Esophagus muscularis mucosa (tissue), 4 donors: ENCODE measurements at regions of chr18 and their contacts with region 1.

Region 1: GRCh38 chr18:11733031-11733430 is 44.0 kb downstream of the GNAL start:
- DNase-seq: peak; percentile 95
- H3K4me3 ChIP-seq: peak overlapping the region; percentile 23 to 48 (median 40)
- H3K27ac ChIP-seq: no peak overlapping the region
- H3K4me1 ChIP-seq: peaks cover 0 to 8% (median 7%) of the 10 kb centered on the region in 4 donors
- H3K27me3 ChIP-seq: no peaks in the 10 kb centered on the region
- CTCF ChIP-seq: peak; percentile 83 to 89 (median 84)
- EP300 ChIP-seq: no peak
- POLR2A ChIP-seq: no peak

Region 2: GRCh38 chr18:11494107-11494506 is 238.9 kb before region 1 on chr18:
- intact Hi-C with region 1: no loop called
- DNase-seq: no peak
- H3K4me3 ChIP-seq: no peak overlapping the region
- H3K27ac ChIP-seq: no peak overlapping the region
- H3K4me1 ChIP-seq: no peaks in the 10 kb centered on the region
- H3K27me3 ChIP-seq: no peaks in the 10 kb centered on the region
- CTCF ChIP-seq: no peak
- EP300 ChIP-seq: no peak
- POLR2A ChIP-seq: no peak

Region 3: DNA sequence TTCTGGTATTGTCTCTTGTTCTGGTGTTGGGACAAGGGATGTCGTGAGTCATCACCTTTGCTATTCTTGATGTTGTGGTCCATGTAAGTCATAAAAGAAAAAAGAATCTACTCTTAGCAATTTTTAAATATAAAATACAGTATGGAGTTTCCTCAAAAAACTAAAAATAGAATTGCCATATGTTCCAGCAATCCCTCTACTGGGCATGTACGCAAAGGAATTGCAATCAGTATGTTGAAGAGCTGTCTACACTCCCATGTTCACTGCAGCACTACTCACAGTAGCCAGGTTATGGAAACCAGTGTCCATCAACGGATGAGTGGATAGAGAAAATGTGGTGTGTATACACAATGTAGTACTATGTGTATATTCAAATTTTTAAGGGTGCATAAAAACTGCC is 54.8 kb before region 1 on chr18:
- intact Hi-C with region 1: no loop called
- DNase-seq: no peak
- H3K4me3 ChIP-seq: no peak overlapping the region
- H3K27ac ChIP-seq: no peak overlapping the region
- H3K4me1 ChIP-seq: no peaks in the 10 kb centered on the region
- H3K27me3 ChIP-seq: peaks cover 0 to 51% (median 0%) of the 10 kb centered on the region in 4 donors
- CTCF ChIP-seq: no peak
- EP300 ChIP-seq: no peak
- POLR2A ChIP-seq: no peak

Region 4: GRCh38 chr18:11851146-11851805 is 118.2 kb after region 1 on chr18 and contains the start of gene CHMP1B:
- intact Hi-C with region 1: loop called (anchors 10 kb)
- DNase-seq: peak; percentile 99
- H3K4me3 ChIP-seq: peak within 1 kb of the TSS; percentile 66 to 94 (median 82)
- H3K27ac ChIP-seq: peak within 1 kb of the TSS; percentile 86 to 96 (median 94)
- H3K4me1 ChIP-seq: peaks cover 31 to 47% (median 42%) of the 10 kb centered on the region in 4 donors
- H3K27me3 ChIP-seq: no peaks in the 10 kb centered on the region
- CTCF ChIP-seq: peak in 1 of 3 experiments; percentile 22
- EP300 ChIP-seq: peak; percentile 13
- POLR2A ChIP-seq: peak; percentile 96
- total RNA-seq, gene CHMP1B: 42.0 to 58.6 (median 49.7) TPM

Region 5: DNA sequence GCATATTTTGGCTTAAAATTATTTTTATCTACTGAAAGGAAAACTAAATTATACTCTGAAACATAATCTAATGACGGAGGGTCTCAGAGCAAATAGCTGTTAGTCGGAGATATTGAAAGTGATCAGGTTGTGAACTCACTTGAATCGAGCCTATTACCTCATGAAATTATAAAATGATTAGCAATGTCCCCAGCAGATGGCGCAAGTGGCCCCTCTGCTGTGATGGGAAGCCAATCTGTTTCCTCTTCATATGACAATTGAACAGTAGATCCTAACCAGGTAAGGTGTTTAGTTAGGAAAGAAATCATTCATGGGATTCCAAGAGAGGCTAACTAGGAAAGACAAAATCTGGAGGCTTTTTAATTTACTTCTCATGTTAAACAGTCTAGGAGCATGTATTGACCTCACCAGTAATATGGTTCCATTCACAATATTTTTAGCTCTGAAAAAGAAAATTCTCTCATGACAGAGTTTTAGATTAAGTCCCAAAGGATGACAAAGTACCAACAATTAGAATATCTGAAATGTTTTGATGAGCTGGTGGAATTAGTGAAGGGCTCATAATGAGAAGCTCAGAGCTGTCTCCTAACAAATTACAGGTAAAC is 204.9 kb after region 1 on chr18:
- intact Hi-C with region 1: loop called (anchors 10 kb)
- DNase-seq: no peak
- H3K4me3 ChIP-seq: no peak overlapping the region
- H3K27ac ChIP-seq: peak overlapping the region in 2 of 4 donors; percentile 10 to 24
- H3K4me1 ChIP-seq: peaks cover 0 to 7% (median 3%) of the 10 kb centered on the region in 4 donors
- H3K27me3 ChIP-seq: no peaks in the 10 kb centered on the region
- CTCF ChIP-seq: peak; percentile 78 to 87 (median 81)
- EP300 ChIP-seq: no peak
- POLR2A ChIP-seq: no peak

Region 6: DNA sequence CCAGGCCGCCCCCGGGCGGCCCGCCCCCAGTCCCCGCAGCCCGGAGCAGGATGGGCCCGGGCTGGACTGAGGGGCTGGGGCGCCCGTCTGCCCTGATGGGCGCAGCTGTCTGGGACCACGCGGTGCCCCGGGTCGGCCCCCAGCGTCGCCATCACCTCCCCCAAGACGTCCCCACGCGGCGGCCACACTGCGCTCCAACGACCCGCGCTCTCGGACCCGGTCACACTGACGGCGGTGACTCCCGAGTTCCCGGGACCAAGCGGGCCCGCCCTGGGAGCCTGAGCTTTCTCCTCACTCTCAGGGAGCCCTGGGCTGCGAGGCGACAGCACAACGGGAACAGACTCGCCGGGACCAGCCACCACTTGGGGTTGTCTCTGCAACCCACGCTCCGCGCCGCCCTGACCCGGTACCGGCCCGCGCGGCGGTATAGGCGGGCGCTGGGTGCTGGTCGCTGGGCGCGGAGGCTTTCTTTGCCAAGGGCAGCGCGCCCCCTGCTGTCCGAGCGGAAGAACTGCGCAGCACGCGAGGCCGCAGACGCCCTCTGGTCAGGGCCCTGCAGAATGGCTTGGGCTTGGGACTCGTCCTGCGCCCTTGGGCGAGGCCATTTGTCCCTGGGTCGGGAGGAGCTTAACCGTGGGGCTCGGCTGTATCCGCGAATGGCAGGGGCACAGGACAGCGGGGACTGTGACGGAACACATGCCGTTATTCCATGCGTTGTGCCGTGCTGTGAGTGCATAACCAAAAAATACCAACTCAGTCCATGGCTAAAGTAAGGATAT is 305.8 kb after region 1 on chr18:
- intact Hi-C with region 1: loop called (anchors 5 kb)
- DNase-seq: peak; percentile 94
- H3K4me3 ChIP-seq: peak overlapping the region; percentile 59 to 66 (median 62)
- H3K27ac ChIP-seq: peak overlapping the region in 3 of 4 donors; percentile 37 to 60 (median 48)
- H3K4me1 ChIP-seq: peaks cover 10 to 21% (median 16%) of the 10 kb centered on the region in 4 donors
- H3K27me3 ChIP-seq: no peaks in the 10 kb centered on the region
- CTCF ChIP-seq: peak in 2 of 3 experiments; percentile 97 to 98
- EP300 ChIP-seq: no peak
- POLR2A ChIP-seq: no peak

Region 7: GRCh38 chr18:12236934-12237832 is 504.2 kb after region 1 on chr18:
- intact Hi-C with region 1: loop called (anchors 5 kb)
- DNase-seq: no peak
- H3K4me3 ChIP-seq: peak overlapping the region in 1 of 4 donors; percentile 22
- H3K27ac ChIP-seq: no peak overlapping the region
- H3K4me1 ChIP-seq: peaks cover 0 to 9% (median 7%) of the 10 kb centered on the region in 4 donors
- H3K27me3 ChIP-seq: peaks cover 0 to 7% (median 0%) of the 10 kb centered on the region in 4 donors
- CTCF ChIP-seq: peak; percentile 63 to 96 (median 84)
- EP300 ChIP-seq: no peak
- POLR2A ChIP-seq: no peak